Right cardiac atrium (tissue), 5 donors: ENCODE measurements at regions of chr15 and their contacts with region 1.

Region 1: GRCh38 chr15:48645558-48646330 is at the start of gene FBN1:
- DNase-seq: peak; percentile 84 to 91 (median 89)
- ATAC-seq: peak; percentile 91 to 93
- H3K4me3 ChIP-seq: peak within 1 kb of the TSS; percentile 58
- H3K27ac ChIP-seq: peak within 1 kb of the TSS; percentile 67
- H3K4me1 ChIP-seq: no peaks in the 10 kb centered on the region
- H3K27me3 ChIP-seq: no peaks in the 10 kb centered on the region
- total RNA-seq, gene FBN1: 31.3 to 101 (median 64.0) TPM

Region 2: GRCh38 chr15:48176112-48176511 is 469.6 kb before region 1 on chr15:
- intact Hi-C with region 1: no loop called
- DNase-seq: no peak
- ATAC-seq: no peak
- H3K4me3 ChIP-seq: no peak overlapping the region
- H3K27ac ChIP-seq: no peak overlapping the region
- H3K4me1 ChIP-seq: no peaks in the 10 kb centered on the region
- H3K27me3 ChIP-seq: no peaks in the 10 kb centered on the region

Region 3: DNA sequence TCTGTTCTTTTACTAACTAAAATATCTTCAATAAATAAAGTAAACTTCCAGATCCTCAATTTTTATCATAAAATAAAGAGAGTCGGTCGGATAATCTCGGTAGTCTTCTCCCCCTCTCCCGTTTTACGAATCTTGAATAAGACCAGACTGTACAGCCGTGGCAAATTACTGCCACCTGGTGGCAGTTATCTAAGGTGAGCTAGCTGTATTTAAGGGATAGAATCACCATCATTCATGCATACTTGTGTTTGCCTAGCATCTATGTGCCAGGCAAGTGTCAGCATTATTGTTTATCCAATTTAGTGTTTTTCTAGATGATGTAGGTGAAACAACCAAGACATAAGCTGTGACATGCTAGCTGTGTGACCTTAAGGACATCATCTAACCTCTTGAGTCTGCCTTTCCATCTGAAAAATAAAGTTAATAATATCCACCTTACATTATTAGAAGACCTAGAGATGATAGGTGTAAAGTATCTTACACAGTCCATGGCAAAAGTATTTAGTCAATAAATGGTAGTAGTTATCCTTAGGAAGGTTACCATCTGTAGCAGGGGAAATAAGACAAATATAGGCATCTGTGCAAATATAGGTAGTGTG is 293.2 kb before region 1 on chr15:
- intact Hi-C with region 1: loop called in 2 of 4 experiments (anchors 5 to 10 kb)
- DNase-seq: peak in 2 of 3 donors; percentile 26 to 72
- ATAC-seq: peak; percentile 79 to 82
- H3K4me3 ChIP-seq: no peak overlapping the region
- H3K27ac ChIP-seq: no peak overlapping the region
- H3K4me1 ChIP-seq: no peaks in the 10 kb centered on the region
- H3K27me3 ChIP-seq: no peaks in the 10 kb centered on the region

Region 4: GRCh38 chr15:48358229-48358641 is 287.5 kb before region 1 on chr15:
- intact Hi-C with region 1: loop called in 2 of 4 experiments (anchors 5 to 10 kb)
- DNase-seq: no peak
- ATAC-seq: peak; percentile 69 to 72
- H3K4me3 ChIP-seq: no peak overlapping the region
- H3K27ac ChIP-seq: no peak overlapping the region
- H3K4me1 ChIP-seq: no peaks in the 10 kb centered on the region
- H3K27me3 ChIP-seq: no peaks in the 10 kb centered on the region

Region 5: GRCh38 chr15:48510976-48511375 is 134.8 kb before region 1 on chr15:
- intact Hi-C with region 1: loop called in 1 of 4 experiments (anchors 10 kb)
- DNase-seq: no peak
- ATAC-seq: peak; percentile 63 to 72
- H3K4me3 ChIP-seq: no peak overlapping the region
- H3K27ac ChIP-seq: no peak overlapping the region
- H3K4me1 ChIP-seq: no peaks in the 10 kb centered on the region
- H3K27me3 ChIP-seq: no peaks in the 10 kb centered on the region

Region 6: GRCh38 chr15:48536681-48537091 is 109.1 kb before region 1 on chr15:
- intact Hi-C with region 1: loop called in 1 of 4 experiments (anchors 10 kb)
- DNase-seq: no peak
- ATAC-seq: peak; percentile 84 to 89
- H3K4me3 ChIP-seq: no peak overlapping the region
- H3K27ac ChIP-seq: peak overlapping the region; percentile 62
- H3K4me1 ChIP-seq: peaks cover 4% of the 10 kb centered on the region
- H3K27me3 ChIP-seq: no peaks in the 10 kb centered on the region

Region 7: GRCh38 chr15:48794697-48795134 is 149.0 kb after region 1 on chr15:
- intact Hi-C with region 1: loop called in 1 of 4 experiments (anchors 10 kb)
- DNase-seq: no peak
- ATAC-seq: peak; percentile 53 to 69
- H3K4me3 ChIP-seq: peak overlapping the region; percentile 22
- H3K27ac ChIP-seq: no peak overlapping the region
- H3K4me1 ChIP-seq: no peaks in the 10 kb centered on the region
- H3K27me3 ChIP-seq: no peaks in the 10 kb centered on the region